ENCODE measurements at regions of chr19 and their contacts with region 1.

Region 1: GRCh38 chr19:1269065-1269477 is at the start of gene CIRBP:
- DNase-seq: peak; percentile 99
- H3K4me3 ChIP-seq: peak within 1 kb of the TSS; percentile 82
- H3K4me3 Mint-ChIP-seq: peak within 1 kb of the TSS; percentile 89
- H3K27ac Mint-ChIP-seq: peak within 1 kb of the TSS; percentile 94
- H3K4me1 ChIP-seq: peaks cover 39% of the 10 kb centered on the region
- H3K4me1 Mint-ChIP-seq: peaks cover 29% of the 10 kb centered on the region
- H3K27me3 ChIP-seq: no peaks in the 10 kb centered on the region
- H3K27me3 Mint-ChIP-seq: no peaks in the 10 kb centered on the region
- CTCF ChIP-seq: no peak
- total RNA-seq, gene CIRBP: 289 and 331 TPM in 2 replicates

Region 2: GRCh38 chr19:1039646-1040475 is 229.2 kb before region 1 on chr19 and contains the start of gene ABCA7:
- CTCF ChIA-PET with region 1: no interaction called
- POLR2A ChIA-PET with region 1: interaction called, 21 read pairs
- intact Hi-C with region 1: no loop called
- DNase-seq: peak; percentile 98 to 99
- H3K4me3 ChIP-seq: peak within 1 kb of the TSS; percentile 78
- H3K4me3 Mint-ChIP-seq: peak within 1 kb of the TSS; percentile 91
- H3K27ac Mint-ChIP-seq: peak within 1 kb of the TSS; percentile 91
- H3K4me1 ChIP-seq: peaks cover 10% of the 10 kb centered on the region
- H3K4me1 Mint-ChIP-seq: no peaks in the 10 kb centered on the region
- H3K27me3 ChIP-seq: no peaks in the 10 kb centered on the region
- H3K27me3 Mint-ChIP-seq: no peaks in the 10 kb centered on the region
- CTCF ChIP-seq: no peak
- total RNA-seq, gene ABCA7: 43.5 and 45.9 TPM in 2 replicates

Region 3: DNA sequence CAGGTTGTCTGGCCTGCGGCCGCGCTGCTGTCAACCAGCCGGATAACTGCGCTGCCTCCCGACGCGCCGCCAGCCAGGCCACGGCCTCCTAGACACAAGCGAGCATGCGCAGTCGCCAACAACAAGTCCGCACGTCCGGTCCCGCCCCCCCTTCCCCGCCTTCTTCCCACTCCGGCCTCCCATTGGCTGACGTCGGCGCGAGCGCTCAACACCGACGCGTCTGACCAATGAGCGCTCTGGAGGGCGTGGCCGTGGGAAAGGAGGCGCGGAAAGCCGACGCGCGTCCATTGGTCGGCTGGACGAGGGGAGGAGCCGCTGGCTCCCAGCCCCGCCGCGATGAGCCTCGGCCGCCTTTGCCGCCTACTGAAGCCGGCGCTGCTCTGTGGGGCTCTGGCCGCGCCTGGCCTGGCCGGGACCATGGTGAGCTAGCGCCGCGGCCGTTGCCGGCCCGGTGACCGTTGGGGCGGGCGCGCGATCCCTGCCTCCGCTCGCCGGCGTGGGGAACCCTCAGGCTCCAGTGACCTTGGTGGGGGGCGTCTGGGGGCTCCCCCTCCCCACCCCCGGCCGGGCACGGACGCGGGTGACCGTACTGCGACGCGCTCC is 165.3 kb before region 1 on chr19 and contains the start of gene GPX4:
- CTCF ChIA-PET with region 1: no interaction called
- POLR2A ChIA-PET with region 1: interaction called, 16 read pairs
- intact Hi-C with region 1: no loop called
- DNase-seq: peak; percentile 96 to 98
- H3K4me3 ChIP-seq: peak within 1 kb of the TSS; percentile 97
- H3K4me3 Mint-ChIP-seq: peak within 1 kb of the TSS; percentile 68
- H3K27ac Mint-ChIP-seq: peak within 1 kb of the TSS; percentile 73
- H3K4me1 ChIP-seq: peaks cover 28% of the 10 kb centered on the region
- H3K4me1 Mint-ChIP-seq: peaks cover 4% of the 10 kb centered on the region
- H3K27me3 ChIP-seq: no peaks in the 10 kb centered on the region
- H3K27me3 Mint-ChIP-seq: no peaks in the 10 kb centered on the region
- CTCF ChIP-seq: no peak
- total RNA-seq, gene GPX4: 500 and 546 TPM in 2 replicates

Region 4: DNA sequence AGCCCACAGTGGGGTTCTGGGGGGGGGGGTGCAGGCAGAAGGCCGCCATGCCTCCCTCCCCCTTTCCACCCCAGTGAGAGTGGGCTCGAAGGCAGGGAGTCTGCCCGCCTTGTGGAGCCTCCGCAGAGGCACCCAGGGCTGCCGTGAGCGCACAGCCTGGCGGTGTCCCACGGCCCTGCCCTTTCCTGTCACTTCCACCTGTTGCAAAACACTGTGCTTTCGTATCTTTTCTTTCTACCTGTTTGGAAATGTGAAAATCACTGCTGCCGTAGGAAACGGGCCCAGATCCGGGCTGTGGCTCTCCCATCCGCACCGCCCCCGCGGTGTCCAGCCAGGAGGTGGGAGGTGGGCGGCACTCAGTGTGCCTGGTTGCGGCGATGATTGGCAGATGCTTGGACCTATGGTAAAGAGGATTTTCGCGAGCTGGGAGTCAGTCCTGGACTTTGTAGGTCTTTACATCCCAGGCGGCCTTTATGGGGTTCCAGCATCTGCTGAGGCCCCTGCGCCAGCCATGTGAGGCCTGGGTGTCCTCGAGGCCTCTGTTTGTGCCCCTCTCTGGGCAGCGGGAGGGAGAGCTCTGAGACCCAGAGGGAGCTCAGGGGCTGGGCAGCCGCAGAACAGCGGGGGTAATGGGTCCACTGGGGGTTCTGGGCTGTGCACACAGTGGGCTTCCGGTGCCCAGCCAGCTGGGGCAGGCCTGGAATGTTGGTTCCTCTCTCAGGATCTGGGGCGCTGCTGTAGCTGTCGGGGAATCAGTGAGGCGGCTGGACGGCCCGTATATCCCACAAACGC is 57.4 kb before region 1 on chr19:
- CTCF ChIA-PET with region 1: interaction called, 3 read pairs
- POLR2A ChIA-PET with region 1: interaction called, 16 read pairs
- intact Hi-C with region 1: no loop called
- DNase-seq: peak in 1 of 2 experiments; percentile 41
- H3K4me3 ChIP-seq: no peak overlapping the region
- H3K4me3 Mint-ChIP-seq: no peak overlapping the region
- H3K27ac Mint-ChIP-seq: no peak overlapping the region
- H3K4me1 ChIP-seq: peaks cover 9% of the 10 kb centered on the region
- H3K4me1 Mint-ChIP-seq: no peaks in the 10 kb centered on the region
- H3K27me3 ChIP-seq: no peaks in the 10 kb centered on the region
- H3K27me3 Mint-ChIP-seq: no peaks in the 10 kb centered on the region
- CTCF ChIP-seq: no peak

Region 5: GRCh38 chr19:1249298-1249989 is 19.6 kb before region 1 on chr19:
- CTCF ChIA-PET with region 1: interaction called, 440 read pairs
- POLR2A ChIA-PET with region 1: interaction called, 110 read pairs
- intact Hi-C with region 1: loop called (anchors 1 kb)
- DNase-seq: peak; percentile 92
- H3K4me3 ChIP-seq: peak overlapping the region; percentile 88
- H3K4me3 Mint-ChIP-seq: peak overlapping the region; percentile 96
- H3K27ac Mint-ChIP-seq: no peak overlapping the region
- H3K4me1 ChIP-seq: peaks cover 35% of the 10 kb centered on the region
- H3K4me1 Mint-ChIP-seq: peaks cover 6% of the 10 kb centered on the region
- H3K27me3 ChIP-seq: no peaks in the 10 kb centered on the region
- H3K27me3 Mint-ChIP-seq: no peaks in the 10 kb centered on the region
- CTCF ChIP-seq: no peak

Region 6: DNA sequence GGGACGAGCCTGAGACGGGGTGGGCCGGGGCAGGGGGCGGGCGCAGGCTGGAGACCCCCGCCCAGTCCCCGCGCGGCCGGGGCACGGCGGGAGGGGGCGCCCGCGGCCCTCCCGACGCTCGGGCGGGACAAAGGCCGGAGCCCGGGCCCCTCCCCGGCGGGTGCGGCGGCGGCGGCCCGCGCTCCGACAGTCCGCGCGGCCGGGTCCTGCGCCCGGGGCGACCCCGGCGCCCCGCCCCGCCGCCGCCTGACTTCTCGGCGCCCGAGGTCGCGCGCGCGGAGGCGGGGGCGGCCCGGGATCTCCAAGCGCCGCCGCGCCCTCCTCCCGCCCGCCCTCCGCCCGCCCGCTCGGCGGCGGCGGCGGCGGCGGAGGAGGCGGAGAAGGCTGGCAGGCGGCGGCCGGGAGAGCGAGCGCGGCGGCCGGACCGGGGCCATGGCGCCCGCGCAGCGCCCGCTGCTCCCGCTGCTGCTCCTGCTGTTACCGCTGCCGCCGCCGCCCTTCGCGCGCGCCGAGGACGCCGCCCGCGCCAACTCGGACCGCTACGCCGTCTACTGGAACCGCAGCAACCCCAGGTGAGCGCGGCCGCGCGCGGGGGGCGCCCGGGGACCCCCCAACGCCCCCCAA is 16.8 kb after region 1 on chr19 and contains the start of gene EFNA2:
- CTCF ChIA-PET with region 1: interaction called, 6 read pairs
- POLR2A ChIA-PET with region 1: interaction called, 11 read pairs
- intact Hi-C with region 1: no loop called
- DNase-seq: no peak
- H3K4me3 ChIP-seq: peak within 1 kb of the TSS; percentile 72
- H3K4me3 Mint-ChIP-seq: peak within 1 kb of the TSS; percentile 80
- H3K27ac Mint-ChIP-seq: peak within 1 kb of the TSS; percentile 84
- H3K4me1 ChIP-seq: peaks cover 43% of the 10 kb centered on the region
- H3K4me1 Mint-ChIP-seq: peaks cover 8% of the 10 kb centered on the region
- H3K27me3 ChIP-seq: no peaks in the 10 kb centered on the region
- H3K27me3 Mint-ChIP-seq: no peaks in the 10 kb centered on the region
- CTCF ChIP-seq: no peak
- total RNA-seq, gene EFNA2: 18.6 and 20.6 TPM in 2 replicates

Region 7: GRCh38 chr19:1296575-1297271 is 27.7 kb after region 1 on chr19:
- CTCF ChIA-PET with region 1: no interaction called
- POLR2A ChIA-PET with region 1: no interaction called
- intact Hi-C with region 1: no loop called
- DNase-seq: no peak
- H3K4me3 ChIP-seq: no peak overlapping the region
- H3K4me3 Mint-ChIP-seq: no peak overlapping the region
- H3K27ac Mint-ChIP-seq: no peak overlapping the region
- H3K4me1 ChIP-seq: peaks cover 7% of the 10 kb centered on the region
- H3K4me1 Mint-ChIP-seq: no peaks in the 10 kb centered on the region
- H3K27me3 ChIP-seq: no peaks in the 10 kb centered on the region
- H3K27me3 Mint-ChIP-seq: no peaks in the 10 kb centered on the region
- CTCF ChIP-seq: no peak

Region 8: DNA sequence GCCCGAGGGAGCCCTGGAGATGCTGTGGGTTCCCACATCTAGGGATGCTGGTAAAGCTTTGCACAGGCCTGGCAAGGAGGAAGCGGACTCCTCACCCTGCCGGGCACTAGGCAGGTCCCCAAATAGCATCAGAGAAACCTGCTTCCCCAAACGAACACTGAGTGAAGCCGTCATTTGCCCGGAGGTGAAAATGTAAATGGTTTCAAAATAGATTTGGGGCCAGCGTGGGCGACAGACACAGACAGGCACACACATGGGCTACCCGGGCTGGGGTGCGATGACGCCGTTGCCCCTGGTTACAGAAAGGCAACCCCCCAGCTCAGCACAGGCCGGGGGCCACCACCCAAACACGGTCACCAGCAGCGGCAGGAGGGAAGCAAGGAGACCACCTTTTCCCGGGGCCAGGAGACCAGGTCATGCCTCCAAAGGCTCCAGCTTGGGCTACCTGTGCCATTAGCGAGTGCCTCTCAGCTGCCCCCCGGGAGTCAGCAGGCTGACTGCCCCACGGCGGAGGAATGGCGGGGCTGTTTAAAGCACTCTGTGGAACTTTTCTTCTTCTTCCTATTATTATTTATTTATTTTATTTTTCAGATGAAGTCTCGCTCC is 67.1 kb after region 1 on chr19:
- CTCF ChIA-PET with region 1: no interaction called
- POLR2A ChIA-PET with region 1: no interaction called
- intact Hi-C with region 1: no loop called
- DNase-seq: no peak
- H3K4me3 ChIP-seq: no peak overlapping the region
- H3K4me3 Mint-ChIP-seq: no peak overlapping the region
- H3K27ac Mint-ChIP-seq: no peak overlapping the region
- H3K4me1 ChIP-seq: no peaks in the 10 kb centered on the region
- H3K4me1 Mint-ChIP-seq: no peaks in the 10 kb centered on the region
- H3K27me3 ChIP-seq: no peaks in the 10 kb centered on the region
- H3K27me3 Mint-ChIP-seq: no peaks in the 10 kb centered on the region
- CTCF ChIP-seq: no peak

Region 9: GRCh38 chr19:1490311-1491113 is 221.4 kb after region 1 on chr19 and contains the start of gene PCSK4:
- CTCF ChIA-PET with region 1: interaction called, 3 read pairs
- POLR2A ChIA-PET with region 1: interaction called, 16 read pairs
- intact Hi-C with region 1: no loop called
- DNase-seq: peak; percentile 97 to 99
- H3K4me3 ChIP-seq: peak within 1 kb of the TSS; percentile 97
- H3K4me3 Mint-ChIP-seq: peak within 1 kb of the TSS; percentile 89
- H3K27ac Mint-ChIP-seq: peak within 1 kb of the TSS; percentile 88
- H3K4me1 ChIP-seq: peaks cover 37% of the 10 kb centered on the region
- H3K4me1 Mint-ChIP-seq: peaks cover 21% of the 10 kb centered on the region
- H3K27me3 ChIP-seq: no peaks in the 10 kb centered on the region
- H3K27me3 Mint-ChIP-seq: no peaks in the 10 kb centered on the region
- CTCF ChIP-seq: no peak
- total RNA-seq, gene PCSK4: 6.4 and 9.8 TPM in 2 replicates

Measured in Caco-2 (cell line).